SK-N-SH (cell line): ENCODE measurements at regions of chr11 and their contacts with region 1.

Region 1: DNA sequence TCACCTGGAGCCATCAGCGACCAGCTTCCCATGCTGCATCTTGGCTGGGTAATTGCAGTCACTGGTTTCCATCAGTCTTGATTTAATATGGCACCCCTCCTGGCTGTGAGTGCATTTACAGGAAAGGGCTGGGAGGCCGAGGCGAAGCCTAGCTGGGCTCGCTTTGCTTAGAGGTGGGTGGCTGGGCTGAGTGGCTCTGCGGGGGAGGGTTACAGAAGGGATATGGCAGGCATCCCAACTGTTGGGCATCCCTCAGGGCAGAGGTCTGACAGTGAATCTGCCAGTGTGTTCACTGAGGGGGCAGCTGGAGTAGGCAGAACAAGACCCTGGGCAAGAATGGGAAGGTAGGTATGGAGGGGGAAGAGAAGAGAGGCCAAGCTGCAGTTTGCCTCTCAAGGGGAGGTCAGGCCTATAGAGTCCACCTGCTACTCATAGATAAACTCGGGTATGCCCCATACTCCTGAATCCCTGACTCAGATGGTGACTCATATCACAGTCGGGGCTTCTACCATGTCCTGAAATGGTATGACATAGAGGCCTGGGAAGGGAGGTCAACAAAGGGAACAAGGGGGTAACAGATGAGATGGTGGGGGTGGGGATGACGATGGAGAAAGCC is 77.5 kb upstream of the PHOX2A start:
- DNase-seq: peak; percentile 78
- H3K4me3 ChIP-seq: no peak overlapping the region
- H3K27ac ChIP-seq: peak overlapping the region; percentile 75 to 100
- H3K4me1 ChIP-seq: peaks cover 34 to 72% of the 10 kb centered on the region in 2 experiments
- H3K27me3 ChIP-seq: no peaks in the 10 kb centered on the region
- CTCF ChIP-seq: no peak
- EP300 ChIP-seq: peak; percentile 95 to 100
- RAD21 ChIP-seq: peak; percentile 44; the same call in 1 of the 2 replicates

Region 2: DNA sequence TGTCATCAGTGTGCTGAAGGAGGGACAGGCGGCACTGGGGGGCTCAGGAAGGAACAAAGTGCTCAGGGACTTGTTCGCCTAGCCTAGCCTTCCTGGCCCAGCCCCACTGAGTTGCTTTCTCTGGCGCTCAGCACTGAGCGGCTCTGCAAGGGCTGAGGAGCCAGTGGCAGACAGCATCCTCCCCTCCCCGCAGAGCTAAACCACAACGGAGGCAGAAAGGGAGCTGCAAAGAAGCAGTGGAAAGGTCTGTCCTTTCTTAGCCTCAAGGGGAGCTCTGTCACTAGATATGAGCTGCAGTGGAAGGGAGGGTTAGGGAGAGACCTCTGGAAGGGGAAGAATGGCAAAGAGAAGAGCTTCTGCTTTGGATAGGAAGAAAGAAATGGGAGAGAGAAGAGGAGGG is 12.2 kb after region 1 on chr11:
- CTCF ChIA-PET with region 1: interaction called, 8 read pairs
- POLR2A ChIA-PET with region 1: interaction called, 22 read pairs
- DNase-seq: peak; percentile 61
- H3K4me3 ChIP-seq: no peak overlapping the region
- H3K27ac ChIP-seq: peak overlapping the region; percentile 35 to 99; a peak in 3 of 4 replicates
- H3K4me1 ChIP-seq: peaks cover 32 to 75% of the 10 kb centered on the region in 2 experiments
- H3K27me3 ChIP-seq: no peaks in the 10 kb centered on the region
- CTCF ChIP-seq: peak; percentile 52
- EP300 ChIP-seq: peak in 1 of 2 experiments; percentile 59; a peak in 1 of 4 replicates
- RAD21 ChIP-seq: peak; percentile 73